HEK293T (cell line): ENCODE measurements at regions of chr19 and their contacts with region 1.

Region 1: DNA sequence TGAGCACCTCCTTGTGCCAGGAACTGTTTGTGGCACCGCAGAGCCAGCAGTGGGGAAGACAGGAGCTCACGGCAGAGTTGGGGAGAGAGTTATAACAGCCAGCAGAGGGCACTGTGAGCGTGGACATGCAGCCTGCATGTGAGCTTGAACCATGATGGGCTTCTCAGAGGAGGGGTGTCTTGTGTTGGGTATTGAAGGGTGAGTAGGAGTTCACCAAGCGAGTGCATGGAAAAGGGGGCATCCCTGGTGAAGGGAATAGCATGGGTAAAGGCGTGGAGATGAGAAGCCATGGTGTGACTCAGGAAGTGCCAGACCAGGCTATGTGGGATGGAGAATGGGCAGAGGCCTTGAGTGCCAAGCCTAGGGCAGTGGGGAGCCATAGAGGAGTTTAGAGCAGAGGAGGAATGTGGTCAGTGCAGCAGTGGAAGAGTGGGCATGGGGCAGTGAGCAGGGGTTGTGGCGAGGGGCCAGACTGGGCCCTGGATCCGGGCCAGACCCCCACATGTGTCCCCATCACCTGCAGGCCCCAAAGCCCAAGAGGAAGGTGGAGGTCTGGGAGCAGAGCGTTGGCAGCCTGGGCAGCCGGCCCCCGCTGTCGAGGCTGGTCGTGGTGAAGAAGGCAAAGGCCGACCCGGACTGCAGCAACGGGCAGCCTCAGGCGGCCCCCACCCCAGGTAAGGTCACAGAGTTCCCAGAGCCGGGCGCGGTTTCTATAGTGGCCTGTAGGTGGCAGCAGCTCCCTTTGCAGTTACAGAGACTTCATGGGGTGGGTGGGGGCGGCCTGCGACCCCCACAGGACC is 11.8 kb upstream of the SHD start:
- DNase-seq: peak; percentile 80

Region 2: DNA sequence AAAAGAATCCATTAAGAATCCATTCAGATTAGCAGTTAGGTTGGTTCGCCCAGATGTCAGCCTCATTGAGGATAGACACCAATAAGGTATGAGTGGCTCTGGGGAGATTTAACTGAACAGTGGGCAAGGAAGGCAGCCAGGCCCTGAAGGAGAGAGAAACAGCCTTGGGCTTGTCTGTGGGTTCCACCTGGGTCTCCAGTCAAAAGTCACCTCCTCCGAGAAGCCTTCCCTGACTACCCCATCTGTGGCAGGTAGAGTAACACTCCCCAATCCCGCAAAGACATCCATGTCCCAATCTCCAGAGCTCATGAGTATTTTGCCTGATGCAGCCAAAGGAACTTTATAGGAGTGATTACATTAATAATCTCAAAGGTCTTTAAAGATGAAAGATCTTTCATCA is 28.5 kb before region 1 on chr19:
- CTCF ChIA-PET with region 1: no interaction called
- POLR2A ChIA-PET with region 1: no interaction called
- DNase-seq: no peak

Region 3: DNA sequence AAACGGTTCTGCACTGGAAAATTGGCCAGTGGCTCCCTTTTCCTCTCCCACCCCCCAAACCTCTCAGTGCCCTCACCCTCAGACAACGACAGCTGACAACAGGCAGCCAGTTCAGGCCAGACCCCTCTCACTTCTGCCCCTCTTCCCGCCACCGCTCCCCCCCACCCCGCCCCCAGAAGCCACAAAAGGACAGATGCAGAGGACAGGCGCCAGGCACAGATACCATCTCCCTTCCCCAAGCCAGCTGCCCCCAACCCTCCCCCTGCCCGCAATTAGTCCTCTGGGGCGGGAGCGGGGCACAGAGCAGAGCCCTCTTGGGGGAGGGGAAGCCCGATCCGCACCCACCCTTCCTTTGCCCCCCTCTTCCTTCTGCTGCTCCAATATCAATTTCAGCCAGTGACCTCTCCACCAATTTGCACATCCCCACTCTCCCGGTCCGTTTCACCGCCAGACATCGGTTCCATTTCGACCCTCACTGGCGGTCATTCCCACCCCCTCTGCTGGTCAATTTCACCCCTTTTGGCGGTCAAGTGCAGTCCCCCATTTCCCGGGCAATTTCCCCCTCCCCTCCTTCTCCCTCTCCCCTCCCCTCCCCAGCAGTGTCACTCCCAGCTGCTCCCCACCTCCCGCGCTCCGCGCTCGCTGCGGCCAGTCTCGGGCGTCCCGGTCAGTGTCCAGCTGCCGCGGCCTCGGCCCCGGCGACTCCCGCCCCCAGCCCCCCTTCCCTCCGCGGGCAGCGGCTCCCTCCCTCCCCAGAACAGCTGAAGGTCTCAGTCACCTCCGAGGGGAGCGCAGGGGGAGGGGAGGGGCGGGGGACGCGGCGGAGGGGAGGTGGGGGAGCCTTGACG is 11.3 kb after region 1 on chr19 and contains the start of gene SHD:
- CTCF ChIA-PET with region 1: interaction called, 11 read pairs
- POLR2A ChIA-PET with region 1: interaction called, 4 read pairs
- DNase-seq: no peak

Region 4: GRCh38 chr19:4291184-4291732 is 24.0 kb after region 1 on chr19:
- CTCF ChIA-PET with region 1: no interaction called
- POLR2A ChIA-PET with region 1: no interaction called
- DNase-seq: no peak

Region 5: DNA sequence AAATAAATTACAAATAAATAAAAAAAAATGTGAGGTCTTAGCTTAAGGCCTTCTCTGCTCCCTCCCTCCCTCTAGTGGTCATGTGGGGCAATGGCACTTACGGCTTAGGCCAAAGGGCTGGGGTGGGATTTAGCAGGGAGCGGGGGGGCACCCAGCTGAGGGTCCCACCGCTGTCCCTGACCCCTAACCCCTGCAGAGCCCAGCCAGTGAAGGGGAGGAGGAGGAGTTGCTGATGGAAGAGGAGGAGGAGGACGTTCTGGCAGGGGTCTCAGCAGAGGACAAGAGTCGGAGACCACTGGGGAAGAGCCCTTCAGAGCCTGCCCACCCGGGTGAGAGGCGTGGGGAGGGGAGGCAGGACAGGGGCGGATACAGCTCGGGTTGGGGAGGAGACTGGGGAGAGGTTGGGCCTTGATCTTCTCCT is 85.4 kb after region 1 on chr19:
- CTCF ChIA-PET with region 1: interaction called, 32 read pairs
- POLR2A ChIA-PET with region 1: interaction called, 6 read pairs
- DNase-seq: peak; percentile 62

Region 6: DNA sequence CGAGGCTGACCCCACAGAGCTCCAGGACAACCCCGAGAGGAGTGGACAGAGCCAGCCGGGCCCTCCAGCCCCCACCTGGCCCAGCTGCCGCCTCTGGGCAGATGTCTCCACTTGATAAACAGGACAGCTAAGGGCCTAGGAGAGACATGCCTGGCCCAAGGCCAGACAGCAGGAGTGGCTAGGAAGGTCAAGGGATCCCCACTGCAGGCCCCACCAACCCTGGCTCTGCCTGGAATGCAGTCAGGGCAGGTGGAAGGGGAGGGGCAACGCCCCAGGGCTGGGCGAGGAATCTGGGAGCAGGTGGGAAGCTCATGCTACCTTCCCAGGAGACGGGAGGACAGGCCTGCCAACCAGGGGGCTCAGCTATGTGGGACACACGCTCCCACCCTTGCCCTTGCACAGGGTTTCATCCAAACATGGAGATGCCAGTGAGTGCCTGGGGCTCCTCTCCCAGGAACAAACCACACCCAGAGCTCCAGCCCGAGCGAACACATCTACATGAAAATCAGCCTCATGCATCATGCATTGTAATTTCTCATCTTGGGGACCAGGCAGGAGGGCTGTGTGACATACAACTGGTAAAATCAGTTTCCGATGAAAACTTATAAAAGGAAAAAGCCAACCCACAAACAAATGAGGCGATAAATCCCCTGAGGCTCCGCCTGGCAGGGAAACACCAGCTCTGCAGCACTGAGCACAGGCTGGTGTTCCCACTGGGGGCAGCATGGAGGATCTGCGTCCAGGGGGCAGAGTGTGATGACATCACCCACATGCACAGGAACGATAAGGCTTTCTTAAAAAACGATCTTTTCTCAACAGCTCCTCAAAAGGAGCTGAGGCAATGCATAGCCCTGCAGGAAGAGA is 108.1 kb after region 1 on chr19:
- CTCF ChIA-PET with region 1: interaction called, 12 read pairs
- POLR2A ChIA-PET with region 1: no interaction called
- DNase-seq: peak; percentile 55